ENCODE measurements at regions of chr10 and their contacts with region 1.

Region 1: GRCh38 chr10:16828114-16828568 is 10.9 kb upstream of the RSU1 start:
- DNase-seq: peak; percentile 89
- H3K4me3 Mint-ChIP-seq: no peak overlapping the region
- H3K27ac Mint-ChIP-seq: no peak overlapping the region
- H3K4me1 Mint-ChIP-seq: peaks cover 5% of the 10 kb centered on the region
- H3K27me3 Mint-ChIP-seq: peaks cover 7% of the 10 kb centered on the region

Region 2: DNA sequence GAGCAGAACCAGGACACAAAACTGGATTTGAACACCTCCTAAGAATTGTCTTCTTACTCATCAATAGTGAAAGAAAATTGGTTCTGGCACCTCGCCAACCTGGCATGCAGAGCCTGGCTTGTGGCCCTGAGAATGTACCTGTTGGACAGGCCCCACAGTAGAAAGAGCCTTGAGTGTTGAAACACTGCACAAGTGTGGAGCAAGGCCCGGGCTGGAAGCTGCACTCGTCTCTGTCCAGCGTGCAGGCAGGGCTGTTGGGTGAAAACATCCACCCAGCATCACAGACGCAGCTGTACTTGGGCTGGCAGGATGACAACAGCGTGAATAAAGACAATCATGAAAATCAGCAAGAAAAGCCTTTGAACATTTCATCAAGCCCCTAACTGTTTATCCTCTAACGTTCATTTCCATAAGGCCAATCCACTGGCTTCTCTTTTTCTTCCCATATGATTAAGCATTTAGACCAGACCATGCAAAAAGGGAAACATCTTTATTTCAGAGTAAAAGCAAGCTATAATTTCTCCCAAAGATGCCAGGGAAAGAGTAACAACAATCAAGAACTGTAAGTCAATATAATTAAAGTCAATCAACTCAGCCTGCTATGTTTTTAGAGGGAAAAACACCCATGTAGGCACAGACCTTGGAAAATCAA is 285.9 kb after region 1 on chr10:
- intact Hi-C with region 1: no loop called
- DNase-seq: no peak
- H3K4me3 Mint-ChIP-seq: no peak overlapping the region
- H3K27ac Mint-ChIP-seq: no peak overlapping the region
- H3K4me1 Mint-ChIP-seq: peaks cover 3% of the 10 kb centered on the region
- H3K27me3 Mint-ChIP-seq: no peaks in the 10 kb centered on the region

Region 3: GRCh38 chr10:17257466-17258321 is 429.6 kb after region 1 on chr10:
- intact Hi-C with region 1: loop called (anchors 1 kb)
- DNase-seq: peak; percentile 89
- H3K4me3 Mint-ChIP-seq: peak overlapping the region; percentile 50
- H3K27ac Mint-ChIP-seq: no peak overlapping the region
- H3K4me1 Mint-ChIP-seq: peaks cover 11% of the 10 kb centered on the region
- H3K27me3 Mint-ChIP-seq: peaks cover 6% of the 10 kb centered on the region

Region 4: GRCh38 chr10:18104223-18104872 is 1276.2 kb after region 1 on chr10:
- intact Hi-C with region 1: loop called (anchors 10 kb)
- DNase-seq: peak; percentile 79
- H3K4me3 Mint-ChIP-seq: no peak overlapping the region
- H3K27ac Mint-ChIP-seq: no peak overlapping the region
- H3K4me1 Mint-ChIP-seq: no peaks in the 10 kb centered on the region
- H3K27me3 Mint-ChIP-seq: no peaks in the 10 kb centered on the region